ENCODE measurements at regions of chr5 and their contacts with region 1.

Region 1: GRCh38 chr5:115033861-115034260 is 135.8 kb downstream of the TRIM36 start:
- DNase-seq: peak; percentile 77

Region 2: GRCh38 chr5:114449860-114450421 is 583.9 kb before region 1 on chr5:
- in situ Hi-C with region 1: loop called (anchors 25 kb)
- DNase-seq: peak; percentile 63

Region 3: DNA sequence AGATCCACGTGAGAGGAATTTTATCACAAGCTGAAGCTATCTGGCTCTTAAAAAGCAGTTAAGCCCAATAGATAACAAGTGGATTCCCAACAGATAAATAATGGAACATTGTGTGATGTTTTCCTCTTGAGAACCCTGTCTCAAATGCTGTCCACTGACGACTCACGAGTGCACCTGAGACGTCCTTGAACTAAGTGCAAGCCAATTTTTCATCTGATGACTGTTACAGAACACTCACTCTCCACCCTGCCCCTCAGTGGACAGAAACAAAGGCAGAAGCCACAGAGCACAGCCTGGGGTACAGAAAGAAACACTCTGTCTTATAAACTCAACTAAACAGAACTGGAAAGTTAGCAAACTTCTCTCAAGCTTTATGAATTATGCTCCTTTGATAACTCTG is 472.4 kb before region 1 on chr5:
- in situ Hi-C with region 1: no loop called
- DNase-seq: no peak

Region 4: GRCh38 chr5:114789773-114790402 is 244.0 kb before region 1 on chr5:
- in situ Hi-C with region 1: loop called (anchors 25 kb)
- DNase-seq: peak; percentile 48